Sigmoid colon (tissue), 7 donors: ENCODE measurements at regions of chr15 and their contacts with region 1.

Region 1: DNA sequence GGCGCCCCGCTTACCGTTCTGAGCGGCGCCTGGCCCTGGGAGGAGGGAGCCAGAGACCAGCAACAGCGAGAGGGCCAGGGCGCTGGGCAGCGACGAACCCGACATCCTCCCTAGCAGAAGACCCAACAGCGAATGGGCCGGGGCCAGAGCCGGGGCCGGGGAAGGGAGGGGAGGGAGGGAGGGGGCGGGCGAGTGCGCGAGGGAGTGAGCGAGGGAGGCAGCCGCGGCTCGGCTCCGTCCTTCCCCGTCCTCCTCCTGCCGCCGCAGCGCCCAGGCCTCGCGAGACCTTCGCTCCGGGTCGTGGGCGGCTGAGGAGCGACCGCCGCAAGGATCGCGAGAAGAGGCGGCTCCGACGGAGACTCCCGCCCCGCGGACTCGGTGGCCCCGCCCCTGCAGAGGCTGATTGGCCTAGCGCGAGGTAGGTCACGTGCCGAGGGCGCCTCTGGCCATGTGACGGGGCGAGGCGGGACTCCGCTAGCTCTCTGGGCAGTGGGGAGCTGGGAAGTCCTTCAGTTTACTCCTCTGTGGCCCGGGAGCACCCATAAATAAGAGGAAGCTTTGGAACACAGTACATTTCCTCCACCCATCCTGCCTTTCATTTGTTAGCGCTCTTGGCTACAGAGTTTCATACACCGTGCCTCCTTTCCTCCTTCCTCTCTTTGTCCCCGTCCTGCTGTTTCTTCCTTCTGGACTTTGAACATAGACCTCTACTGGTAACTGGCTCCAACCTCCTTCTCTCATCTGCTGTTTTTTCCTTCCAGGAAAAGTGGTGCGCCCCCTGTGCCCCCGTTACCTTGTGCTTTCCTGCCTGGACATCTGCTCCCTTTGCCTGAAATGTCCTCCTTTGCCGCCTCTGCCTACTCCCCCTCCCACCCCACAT is at the start of gene NPTN:
- DNase-seq: peak; percentile 99
- H3K4me3 ChIP-seq: peak within 1 kb of the TSS; percentile 87 to 99 (median 91)
- H3K27ac ChIP-seq: peak within 1 kb of the TSS; percentile 96 to 100 (median 99)
- H3K4me1 ChIP-seq: peaks cover 0 to 46% (median 41%) of the 10 kb centered on the region in 4 donors
- H3K27me3 ChIP-seq: no peaks in the 10 kb centered on the region
- CTCF ChIP-seq: no peak
- EP300 ChIP-seq: peak in 1 of 4 donors; percentile 49
- POLR2A ChIP-seq: peak; percentile 52 to 81
- total RNA-seq, gene NPTN: 216 to 320 (median 299) TPM

Region 2: DNA sequence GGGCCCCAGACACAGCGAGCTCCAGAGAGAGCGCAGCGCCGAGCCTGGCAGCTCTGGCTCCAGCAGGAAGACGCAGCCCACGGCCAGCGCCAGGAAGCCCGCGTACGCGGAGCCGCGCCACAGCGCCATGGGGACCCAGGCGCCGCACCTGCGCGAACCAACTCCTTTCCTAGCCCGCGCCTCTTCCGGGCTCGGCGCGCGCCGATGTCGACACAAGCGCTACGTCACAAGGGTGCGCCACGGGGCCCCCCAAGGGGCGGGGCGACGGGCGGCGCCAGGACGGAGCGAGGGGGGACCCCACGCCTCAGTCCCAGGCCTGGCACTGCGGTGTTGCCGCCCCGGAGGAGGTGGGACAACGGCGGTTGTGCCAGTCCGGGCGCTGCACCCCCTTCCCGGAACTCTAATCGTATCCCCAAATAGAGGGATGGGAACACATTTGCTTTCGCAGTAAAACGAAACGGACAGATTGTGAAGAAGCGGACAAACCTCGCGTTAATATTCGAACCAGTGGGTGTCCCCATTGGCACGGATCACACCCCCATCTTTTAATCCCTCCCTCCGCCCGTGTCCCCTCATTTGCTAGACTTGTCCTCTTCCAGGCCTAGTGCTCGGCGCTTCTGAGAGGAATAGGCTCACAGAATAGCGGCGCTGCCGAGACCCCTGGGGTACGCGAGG is 849.7 kb before region 1 on chr15 and contains the start of gene ADPGK:
- intact Hi-C with region 1: loop called (anchors 5 kb)
- DNase-seq: peak; percentile 96
- H3K4me3 ChIP-seq: peak within 1 kb of the TSS; percentile 82 to 93 (median 86)
- H3K27ac ChIP-seq: peak within 1 kb of the TSS; percentile 92 to 97 (median 94)
- H3K4me1 ChIP-seq: peaks cover 0 to 27% (median 20%) of the 10 kb centered on the region in 4 donors
- H3K27me3 ChIP-seq: no peaks in the 10 kb centered on the region
- CTCF ChIP-seq: no peak
- EP300 ChIP-seq: peak in 1 of 4 donors; percentile 74
- POLR2A ChIP-seq: peak; percentile 70 to 72
- total RNA-seq, gene ADPGK: 23.9 to 30.5 (median 27.2) TPM

Region 3: DNA sequence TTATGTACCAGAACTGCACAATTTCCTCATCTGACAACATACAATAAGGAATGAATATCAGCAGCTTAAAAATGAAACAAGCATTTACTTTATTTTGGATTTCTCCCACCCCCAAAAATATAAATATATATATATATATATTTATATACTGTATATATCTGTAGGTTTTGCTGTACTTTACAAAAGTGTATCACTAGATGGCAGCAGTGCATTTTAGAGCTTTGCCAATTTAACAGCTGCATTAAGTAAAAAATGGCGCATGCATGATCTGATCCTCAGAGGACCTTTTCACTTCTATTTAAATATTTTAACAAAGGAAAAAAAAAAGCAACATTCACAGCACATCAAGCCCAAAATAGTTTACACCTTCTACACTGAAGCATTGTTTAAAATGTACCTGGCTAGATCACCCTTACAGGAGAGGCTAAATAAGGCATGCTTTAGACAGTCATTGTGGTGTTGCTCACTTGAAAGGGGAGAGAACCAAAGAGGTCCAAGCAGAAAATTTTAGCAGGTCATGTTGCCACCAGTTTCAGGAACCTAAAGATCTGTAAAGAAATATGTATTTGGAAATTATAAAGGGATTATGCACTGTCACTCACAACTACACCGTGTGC is 72.7 kb before region 1 on chr15:
- intact Hi-C with region 1: loop called (anchors 2 kb)
- DNase-seq: no peak
- H3K4me3 ChIP-seq: no peak overlapping the region
- H3K27ac ChIP-seq: peak overlapping the region in 1 of 4 donors; percentile 21
- H3K4me1 ChIP-seq: peaks cover 0 to 20% (median 13%) of the 10 kb centered on the region in 4 donors
- H3K27me3 ChIP-seq: no peaks in the 10 kb centered on the region
- CTCF ChIP-seq: peak in 2 of 4 experiments; percentile 23 to 54
- EP300 ChIP-seq: no peak
- POLR2A ChIP-seq: no peak

Region 4: DNA sequence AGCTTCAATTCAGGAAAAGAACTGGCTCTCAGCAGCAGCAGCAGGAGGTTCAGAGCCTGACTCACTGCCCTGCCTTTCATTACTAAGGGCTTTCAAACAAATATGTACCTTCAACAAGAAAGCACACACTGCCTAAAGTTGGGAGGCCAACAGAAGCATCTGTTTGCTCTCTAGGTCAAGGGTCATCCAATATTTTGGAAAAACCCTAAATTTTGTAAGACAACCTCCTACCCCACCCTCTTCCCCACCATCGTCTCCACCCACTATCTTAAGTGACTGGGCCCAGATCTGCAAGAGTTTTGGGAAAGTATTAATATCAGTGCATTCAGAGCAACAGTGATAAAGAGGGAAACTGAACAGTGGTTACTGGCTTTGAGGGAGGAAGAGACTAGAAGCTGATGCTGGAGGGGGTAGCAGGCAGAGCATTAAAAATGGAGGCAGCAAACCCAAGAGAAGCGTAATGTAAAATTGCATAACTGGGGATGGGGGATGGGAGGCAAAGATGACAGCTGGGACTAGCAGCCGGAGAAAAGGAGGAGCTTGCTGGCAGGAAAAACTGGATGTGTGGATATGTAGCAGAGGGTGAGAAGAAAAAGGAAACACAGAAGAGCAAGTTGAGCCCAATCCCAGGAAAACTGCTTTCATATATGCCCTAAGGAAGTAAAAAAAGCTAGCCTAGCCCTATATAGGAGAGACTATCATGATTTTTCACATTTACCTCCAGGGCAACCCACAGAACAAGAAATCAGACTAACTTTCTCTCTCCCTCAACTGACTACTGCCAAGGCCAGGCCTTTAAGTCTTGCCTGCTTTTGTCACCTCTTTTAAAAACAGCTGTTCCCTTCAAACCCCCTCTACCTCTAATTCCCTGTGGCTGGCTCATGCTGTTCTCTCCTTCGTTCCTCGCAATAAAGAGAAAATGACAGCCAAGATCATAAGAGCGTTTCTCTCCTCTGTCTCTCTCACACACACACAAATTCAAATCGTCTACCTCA is 31.6 kb before region 1 on chr15:
- intact Hi-C with region 1: loop called (anchors 2 kb)
- DNase-seq: peak; percentile 89
- H3K4me3 ChIP-seq: no peak overlapping the region
- H3K27ac ChIP-seq: peak overlapping the region; percentile 75 to 89 (median 84)
- H3K4me1 ChIP-seq: peaks cover 0 to 100% (median 98%) of the 10 kb centered on the region in 4 donors
- H3K27me3 ChIP-seq: no peaks in the 10 kb centered on the region
- CTCF ChIP-seq: no peak
- EP300 ChIP-seq: peak in 1 of 4 donors; percentile 25
- POLR2A ChIP-seq: no peak

Region 5: GRCh38 chr15:73697033-73697467 is 63.7 kb after region 1 on chr15:
- intact Hi-C with region 1: loop called (anchors 1 kb)
- DNase-seq: peak; percentile 93
- H3K4me3 ChIP-seq: no peak overlapping the region
- H3K27ac ChIP-seq: peak overlapping the region in 2 of 4 donors; percentile 21 to 47
- H3K4me1 ChIP-seq: peaks cover 0 to 48% (median 40%) of the 10 kb centered on the region in 4 donors
- H3K27me3 ChIP-seq: peaks cover 0 to 2% (median 0%) of the 10 kb centered on the region in 3 donors
- CTCF ChIP-seq: no peak
- EP300 ChIP-seq: no peak
- POLR2A ChIP-seq: no peak

Region 6: DNA sequence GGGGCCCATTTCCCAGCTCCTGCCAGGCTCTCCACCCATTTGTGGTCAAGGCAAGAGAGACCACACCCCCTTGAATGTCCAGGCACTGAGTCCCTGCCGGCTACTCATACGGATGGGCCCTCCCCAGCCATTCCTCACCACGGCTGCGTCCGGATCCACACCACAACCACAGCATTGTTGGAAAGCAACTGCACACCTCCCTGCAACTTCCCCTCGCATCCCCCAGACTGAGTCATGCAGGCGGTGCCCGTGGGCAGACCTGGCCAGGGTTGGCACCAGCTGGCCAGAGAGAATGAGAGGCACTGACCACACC is 323.3 kb after region 1 on chr15:
- intact Hi-C with region 1: no loop called
- DNase-seq: peak; percentile 66
- H3K4me3 ChIP-seq: no peak overlapping the region
- H3K27ac ChIP-seq: no peak overlapping the region
- H3K4me1 ChIP-seq: peaks cover 0 to 11% (median 7%) of the 10 kb centered on the region in 4 donors
- H3K27me3 ChIP-seq: no peaks in the 10 kb centered on the region
- CTCF ChIP-seq: no peak
- EP300 ChIP-seq: no peak
- POLR2A ChIP-seq: no peak